ENCODE measurements at regions of chr2 and their contacts with region 1.

Region 1: GRCh38 chr2:1750933-1751766 is 6.8 kb upstream of the PXDN start:
- DNase-seq: peak; percentile 65 to 85
- H3K4me3 ChIP-seq: no peak overlapping the region
- H3K27ac ChIP-seq: no peak overlapping the region
- H3K4me1 ChIP-seq: peaks cover 0 to 3% (median 0%) of the 10 kb centered on the region in 4 experiments; a peak in 1 of 7 replicates
- H3K27me3 ChIP-seq: peaks cover 0 to 21% (median 5%) of the 10 kb centered on the region in 4 experiments; a peak in 3 of 7 replicates
- CTCF ChIP-seq: peak in 2 of 3 experiments; percentile 78 to 92; a peak in 3 of 4 replicates
- EP300 ChIP-seq: no peak
- POLR2A ChIP-seq: no peak
- RAD21 ChIP-seq: peak; percentile 70 to 74

Region 2: DNA sequence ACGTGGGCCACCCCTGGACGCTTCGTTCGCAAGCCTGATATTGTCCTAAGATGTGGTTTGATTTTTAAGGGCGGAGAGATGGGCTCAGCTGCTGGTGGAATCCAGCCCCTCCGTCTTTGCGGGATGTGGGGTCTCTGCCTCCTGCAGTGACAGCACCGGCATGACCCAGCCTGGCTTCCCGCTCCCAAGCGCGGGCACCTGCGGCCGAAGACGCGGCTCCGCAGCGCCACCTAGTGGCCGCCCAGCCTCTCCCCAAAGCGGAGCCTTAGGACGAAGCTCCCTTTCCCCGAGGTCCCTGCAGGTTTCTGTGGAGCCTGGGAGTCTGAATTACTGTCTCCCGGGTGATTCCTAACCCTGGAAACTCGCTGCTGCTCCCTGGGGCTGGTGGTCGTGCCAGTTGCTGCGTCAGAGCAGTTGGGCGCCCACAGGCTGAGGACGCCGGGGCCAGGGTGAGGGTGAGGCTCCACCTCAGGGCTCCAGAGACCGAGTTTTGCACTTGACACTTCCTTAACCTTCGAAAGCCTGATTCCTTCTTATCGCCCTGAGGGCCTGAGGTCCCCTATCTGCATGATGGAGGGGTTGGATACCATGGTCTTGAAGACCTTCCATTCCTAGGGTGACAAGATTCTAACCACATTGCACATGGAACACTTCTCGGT is 200.4 kb before region 1 on chr2:
- CTCF ChIA-PET with region 1: interaction called, 10 read pairs
- POLR2A ChIA-PET with region 1: no interaction called
- DNase-seq: peak in 1 of 2 experiments; percentile 91
- H3K4me3 ChIP-seq: no peak overlapping the region
- H3K27ac ChIP-seq: no peak overlapping the region
- H3K4me1 ChIP-seq: no peaks in the 10 kb centered on the region
- H3K27me3 ChIP-seq: peaks cover 0 to 4% (median 3%) of the 10 kb centered on the region in 4 experiments; a peak in 3 of 7 replicates
- CTCF ChIP-seq: peak; percentile 85 to 94 (median 91)
- EP300 ChIP-seq: no peak
- POLR2A ChIP-seq: no peak
- RAD21 ChIP-seq: peak; percentile 71 to 81

Region 3: DNA sequence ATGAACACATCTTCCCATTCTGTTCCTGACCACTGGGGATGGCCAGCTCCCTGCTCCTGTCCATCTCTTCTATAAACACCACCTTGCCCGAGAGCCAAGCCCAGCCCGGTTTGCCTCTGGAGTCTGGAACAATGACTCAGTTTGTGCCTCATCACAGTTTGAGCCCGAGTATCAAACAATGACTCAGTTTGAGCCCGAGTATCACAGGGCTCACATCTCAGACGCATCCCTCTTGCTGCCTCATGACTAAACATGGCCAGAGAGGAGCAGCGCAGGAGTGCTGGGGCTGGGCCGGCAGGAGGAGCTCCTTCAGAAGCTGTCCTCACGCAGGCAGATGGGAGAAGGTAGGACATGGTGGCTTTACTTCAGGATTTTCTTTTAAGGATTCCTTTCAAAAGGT is 75.5 kb before region 1 on chr2:
- CTCF ChIA-PET with region 1: interaction called, 14 read pairs
- POLR2A ChIA-PET with region 1: no interaction called
- DNase-seq: no peak
- H3K4me3 ChIP-seq: no peak overlapping the region
- H3K27ac ChIP-seq: no peak overlapping the region
- H3K4me1 ChIP-seq: no peaks in the 10 kb centered on the region
- H3K27me3 ChIP-seq: no peaks in the 10 kb centered on the region
- CTCF ChIP-seq: peak in 1 of 3 experiments; percentile 2; a peak in 1 of 4 replicates
- EP300 ChIP-seq: no peak
- POLR2A ChIP-seq: no peak
- RAD21 ChIP-seq: peak in 1 of 2 experiments; percentile 20; a peak in 2 of 4 replicates

Region 4: GRCh38 chr2:1692342-1692741 is 58.8 kb before region 1 on chr2:
- CTCF ChIA-PET with region 1: interaction called, 17 read pairs
- POLR2A ChIA-PET with region 1: no interaction called
- DNase-seq: no peak
- H3K4me3 ChIP-seq: no peak overlapping the region
- H3K27ac ChIP-seq: no peak overlapping the region
- H3K4me1 ChIP-seq: no peaks in the 10 kb centered on the region; a peak in 1 of 7 replicates
- H3K27me3 ChIP-seq: no peaks in the 10 kb centered on the region
- CTCF ChIP-seq: no peak
- EP300 ChIP-seq: no peak
- POLR2A ChIP-seq: no peak
- RAD21 ChIP-seq: no peak

Region 5: DNA sequence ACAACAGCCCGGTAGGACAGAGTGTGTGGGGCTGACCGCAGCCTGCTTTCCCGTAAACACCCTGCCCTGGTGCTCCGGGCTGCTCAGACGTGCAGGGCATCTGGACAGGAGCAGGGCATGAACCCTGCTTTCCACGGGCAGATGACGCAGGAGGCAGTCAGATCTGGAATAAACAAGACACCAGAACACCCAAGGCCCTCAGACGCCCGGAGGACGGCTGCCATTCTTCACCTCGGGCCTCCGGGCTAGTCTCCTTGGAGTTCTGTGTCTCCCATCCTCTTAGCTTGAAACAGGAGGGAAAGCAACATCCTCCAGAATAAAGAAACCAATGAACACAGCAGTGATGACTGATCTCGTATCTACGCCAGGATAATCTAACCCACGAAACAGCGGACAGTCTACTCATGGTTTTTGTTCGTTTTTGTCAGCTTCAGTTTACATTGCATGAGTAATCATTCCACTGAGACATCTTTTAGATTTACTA is 14.1 kb before region 1 on chr2:
- CTCF ChIA-PET with region 1: interaction called, 11 read pairs
- POLR2A ChIA-PET with region 1: interaction called, 11 read pairs
- DNase-seq: no peak
- H3K4me3 ChIP-seq: no peak overlapping the region
- H3K27ac ChIP-seq: no peak overlapping the region
- H3K4me1 ChIP-seq: peaks cover under 1 to 20% (median 4%) of the 10 kb centered on the region in 4 experiments; a peak in 6 of 7 replicates
- H3K27me3 ChIP-seq: no peaks in the 10 kb centered on the region
- CTCF ChIP-seq: no peak
- EP300 ChIP-seq: no peak
- POLR2A ChIP-seq: no peak
- RAD21 ChIP-seq: no peak

Measured in H1 (cell line).